Adrenal gland (tissue), 19 donors: ENCODE measurements at regions of chr7 and their contacts with region 1.

Region 1: DNA sequence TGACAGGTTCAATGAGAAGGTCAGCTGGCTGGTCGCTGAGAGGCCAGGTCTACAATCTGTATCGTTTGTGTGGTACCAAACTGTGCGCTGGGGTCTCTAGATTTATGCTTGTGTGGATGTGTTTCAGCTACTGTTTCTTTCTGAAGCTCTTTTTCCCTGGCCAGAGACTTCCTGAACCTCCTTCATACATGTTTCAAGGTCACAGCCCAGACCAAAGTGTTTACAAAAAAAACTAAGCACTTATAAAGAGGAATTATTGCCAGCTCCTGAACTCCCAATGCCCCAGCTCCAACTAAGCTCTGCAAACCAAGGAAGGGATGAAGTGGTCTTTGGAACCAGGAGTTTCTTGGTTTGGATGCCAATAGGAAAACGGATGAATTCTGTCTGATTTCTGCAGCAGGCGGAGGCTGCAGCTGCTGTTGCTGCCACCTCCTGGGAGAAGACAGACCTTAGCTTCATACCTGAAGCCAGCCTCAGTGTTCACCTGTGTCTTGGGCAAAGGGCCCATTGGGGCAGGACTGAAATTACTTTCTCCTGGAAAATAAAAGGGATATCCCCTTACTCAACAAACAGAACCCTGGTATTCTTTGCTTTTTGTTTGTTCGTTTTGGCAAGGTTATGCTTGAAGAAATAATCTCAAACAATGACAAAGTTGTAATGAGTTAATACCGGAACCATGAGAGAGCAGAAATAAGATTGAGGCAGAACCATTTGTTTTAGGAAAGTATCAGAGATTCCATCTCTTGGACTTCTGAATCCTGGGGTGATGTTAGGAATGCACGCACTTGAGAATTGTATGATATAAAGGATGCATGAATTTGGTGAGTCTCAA is 24.6 kb upstream of the MKLN1 start:
- DNase-seq: peak in 3 of 7 donors; percentile 24 to 68 (median 26)
- H3K4me3 ChIP-seq: no peak overlapping the region
- H3K27ac ChIP-seq: no peak overlapping the region
- H3K4me1 ChIP-seq: peaks cover 7 to 9% of the 10 kb centered on the region in 2 donors
- H3K27me3 ChIP-seq: no peaks in the 10 kb centered on the region
- CTCF ChIP-seq: peak in 4 of 6 experiments; percentile 41 to 54 (median 47)
- POLR2A ChIP-seq: no peak

Region 2: DNA sequence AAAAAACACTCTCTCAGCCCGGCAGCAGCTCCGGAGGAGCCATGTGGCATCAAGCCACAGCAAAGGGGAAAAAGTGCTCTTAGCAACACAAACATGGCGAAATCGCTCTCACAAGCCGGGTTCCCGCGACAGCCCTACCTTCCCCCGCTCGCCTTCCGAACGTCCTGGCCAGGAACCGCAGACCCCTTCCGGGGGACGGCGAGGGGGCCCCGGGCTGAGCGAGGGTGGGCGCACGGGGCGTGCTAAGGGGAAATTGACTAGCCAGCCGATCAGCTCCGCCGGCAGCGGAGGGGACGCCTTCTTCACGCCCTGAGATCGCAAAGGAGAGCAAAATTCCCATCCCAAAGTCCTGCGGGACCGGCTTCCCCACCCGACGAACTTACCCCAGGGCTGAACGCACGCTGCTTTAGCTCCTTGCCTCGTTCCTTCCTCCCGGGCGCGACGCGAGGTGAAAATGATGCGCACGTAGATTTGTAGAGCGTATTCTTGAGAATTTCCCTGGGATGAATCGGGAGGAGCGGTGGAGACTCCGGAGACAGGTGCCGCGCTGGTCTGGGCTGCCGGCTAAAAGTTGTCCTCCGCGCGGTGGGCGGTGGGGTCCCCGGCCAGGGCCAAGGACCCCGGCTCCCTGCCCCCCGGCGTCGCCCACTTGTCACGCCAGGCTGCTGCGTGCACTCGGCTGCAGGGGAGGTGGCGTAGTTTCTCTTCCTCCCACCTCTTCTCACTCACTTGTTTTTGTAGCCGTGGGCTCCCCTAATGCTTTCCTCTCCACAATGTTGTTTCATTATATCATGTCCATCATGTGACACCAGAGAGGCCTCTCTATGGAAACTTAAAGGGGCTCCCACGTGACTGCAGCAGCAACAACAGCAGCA is 195.5 kb before region 1 on chr7:
- intact Hi-C with region 1: loop called in 1 of 2 experiments (anchors 10 kb)
- DNase-seq: peak; percentile 78 to 91 (median 83)
- H3K4me3 ChIP-seq: peak overlapping the region; percentile 43 to 100 (median 65)
- H3K27ac ChIP-seq: peak overlapping the region; percentile 94 to 99 (median 97)
- H3K4me1 ChIP-seq: peaks cover 37 to 56% of the 10 kb centered on the region in 2 donors
- H3K27me3 ChIP-seq: no peaks in the 10 kb centered on the region
- CTCF ChIP-seq: no peak
- POLR2A ChIP-seq: peak; percentile 84 to 96

Region 3: DNA sequence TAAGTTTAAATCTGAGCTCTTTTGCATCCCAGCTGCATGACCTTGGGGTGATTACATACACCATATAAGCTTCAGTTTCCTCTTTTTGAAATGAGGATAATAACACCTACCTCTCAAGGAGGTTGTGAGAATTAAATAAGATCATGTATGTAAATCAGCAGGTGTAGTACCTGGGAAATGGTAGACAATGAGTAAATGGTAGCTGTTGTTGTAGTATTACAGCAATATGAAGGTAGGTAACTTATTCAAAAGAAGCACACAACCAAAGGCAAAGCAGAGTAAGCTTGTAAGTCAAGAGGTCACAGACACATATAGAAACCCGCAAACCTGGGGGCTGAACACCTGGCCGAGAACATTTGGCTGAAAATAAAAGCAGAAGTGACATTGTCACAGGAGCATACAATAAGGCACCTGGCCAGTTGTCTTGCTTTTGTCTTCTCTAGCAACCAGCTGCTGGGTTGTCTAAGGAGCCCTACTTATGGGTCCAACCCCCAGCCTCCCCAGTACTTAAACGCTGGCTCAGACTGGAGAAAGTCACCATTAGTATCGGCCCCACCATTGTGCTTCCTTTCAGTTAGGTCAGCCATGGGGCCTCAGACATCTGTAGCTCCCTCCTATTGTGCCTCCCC is 179.0 kb before region 1 on chr7:
- intact Hi-C with region 1: no loop called
- DNase-seq: no peak
- H3K4me3 ChIP-seq: no peak overlapping the region
- H3K27ac ChIP-seq: no peak overlapping the region
- H3K4me1 ChIP-seq: no peaks in the 10 kb centered on the region
- H3K27me3 ChIP-seq: no peaks in the 10 kb centered on the region
- CTCF ChIP-seq: no peak
- POLR2A ChIP-seq: no peak